ENCODE measurements at regions of chr6 and their contacts with region 1.

Region 1: GRCh38 chr6:159134701-159135364 is 34.4 kb upstream of the FNDC1 start:
- DNase-seq: peak; percentile 89
- H3K4me3 Mint-ChIP-seq: no peak overlapping the region
- H3K27ac Mint-ChIP-seq: no peak overlapping the region
- H3K4me1 Mint-ChIP-seq: no peaks in the 10 kb centered on the region
- H3K27me3 Mint-ChIP-seq: peaks cover 5% of the 10 kb centered on the region

Region 2: GRCh38 chr6:158704181-158704822 is 430.5 kb before region 1 on chr6:
- CTCF ChIA-PET with region 1: no interaction called
- intact Hi-C with region 1: loop called (anchors 2 kb)
- DNase-seq: peak; percentile 80
- H3K4me3 Mint-ChIP-seq: peak overlapping the region; percentile 58
- H3K27ac Mint-ChIP-seq: no peak overlapping the region
- H3K4me1 Mint-ChIP-seq: peaks cover 15% of the 10 kb centered on the region
- H3K27me3 Mint-ChIP-seq: no peaks in the 10 kb centered on the region

Region 3: GRCh38 chr6:158905277-158905676 is 229.6 kb before region 1 on chr6:
- CTCF ChIA-PET with region 1: no interaction called
- intact Hi-C with region 1: no loop called
- DNase-seq: no peak
- H3K4me3 Mint-ChIP-seq: no peak overlapping the region
- H3K27ac Mint-ChIP-seq: no peak overlapping the region
- H3K4me1 Mint-ChIP-seq: peaks cover 6% of the 10 kb centered on the region
- H3K27me3 Mint-ChIP-seq: no peaks in the 10 kb centered on the region

Region 4: DNA sequence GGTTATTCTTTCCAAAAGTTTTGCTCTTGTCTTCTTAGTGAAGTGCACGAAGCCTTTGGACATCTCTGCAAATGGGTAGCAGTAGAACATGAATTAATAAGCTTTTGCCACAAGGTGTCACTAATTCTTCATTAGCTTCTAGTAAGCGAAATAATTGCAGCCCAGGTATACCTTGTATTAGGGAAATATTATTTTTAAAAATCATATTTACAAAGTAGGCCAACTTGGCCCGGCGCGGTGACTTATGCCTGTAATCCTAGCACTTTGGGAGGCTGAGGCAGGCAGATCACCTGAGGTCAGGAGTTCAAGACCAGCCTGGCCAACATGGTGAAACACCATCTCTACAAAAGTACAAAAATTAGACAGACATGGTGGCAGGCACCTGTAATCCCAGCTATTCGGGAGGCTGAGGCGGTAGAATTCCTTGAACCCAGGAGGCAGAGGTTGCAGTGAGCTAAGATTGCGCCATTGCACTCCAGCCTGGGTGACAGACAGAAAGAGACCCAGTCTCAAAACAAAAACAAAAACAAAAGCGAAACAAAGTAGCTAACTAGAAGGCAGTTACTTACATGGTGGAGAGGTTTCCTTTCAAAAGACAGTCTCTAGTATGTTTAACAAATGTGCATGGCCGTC is 126.1 kb before region 1 on chr6:
- CTCF ChIA-PET with region 1: interaction called, 215 read pairs
- intact Hi-C with region 1: loop called (anchors 1 kb)
- DNase-seq: no peak
- H3K4me3 Mint-ChIP-seq: no peak overlapping the region
- H3K27ac Mint-ChIP-seq: no peak overlapping the region
- H3K4me1 Mint-ChIP-seq: peaks cover 29% of the 10 kb centered on the region
- H3K27me3 Mint-ChIP-seq: no peaks in the 10 kb centered on the region

Region 5: DNA sequence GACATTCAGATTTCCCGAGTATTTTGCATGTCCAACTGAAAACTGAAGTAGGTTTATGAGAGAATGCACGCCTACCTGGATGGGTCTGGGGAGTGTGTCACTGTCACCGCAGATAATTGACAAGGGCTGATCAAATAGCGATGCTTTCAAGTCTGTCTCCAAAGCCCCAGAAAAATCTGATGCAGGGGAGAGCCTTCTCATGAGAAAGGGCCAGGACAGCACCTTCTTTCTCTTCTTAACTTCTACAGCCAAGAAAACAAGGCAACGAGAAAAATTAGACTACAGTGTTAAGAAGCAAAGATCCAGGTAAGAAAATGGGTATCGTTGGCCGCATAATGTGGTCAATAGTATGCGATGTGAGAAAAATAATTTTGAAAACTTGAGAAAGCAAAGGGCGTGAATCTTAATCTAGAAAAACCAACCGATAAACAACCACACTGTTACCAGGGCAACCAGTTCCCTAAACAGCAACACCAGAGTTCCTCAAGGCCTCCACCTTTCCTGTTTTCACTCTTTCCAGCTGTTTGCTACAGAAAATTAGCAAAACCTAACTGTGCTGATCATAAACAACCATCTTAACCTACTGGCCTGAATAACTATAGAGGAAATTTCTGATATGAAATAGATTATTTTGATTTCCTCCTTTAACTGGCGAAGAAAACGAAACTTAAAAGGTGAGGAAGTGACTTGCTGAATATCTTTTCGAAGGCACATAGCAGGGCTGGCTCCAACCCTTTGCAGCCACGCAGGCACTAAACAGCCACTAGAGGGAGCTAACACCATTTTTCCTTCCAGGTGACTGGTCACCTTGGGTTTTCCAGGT is 92.6 kb before region 1 on chr6:
- CTCF ChIA-PET with region 1: interaction called, 12 read pairs
- intact Hi-C with region 1: loop called (anchors 1 kb)
- DNase-seq: peak; percentile 86
- H3K4me3 Mint-ChIP-seq: peak overlapping the region; percentile 96
- H3K27ac Mint-ChIP-seq: peak overlapping the region; percentile 98
- H3K4me1 Mint-ChIP-seq: peaks cover 69% of the 10 kb centered on the region
- H3K27me3 Mint-ChIP-seq: no peaks in the 10 kb centered on the region

Region 6: GRCh38 chr6:159090530-159091480 is 44.0 kb before region 1 on chr6:
- CTCF ChIA-PET with region 1: no interaction called
- intact Hi-C with region 1: no loop called
- DNase-seq: no peak
- H3K4me3 Mint-ChIP-seq: no peak overlapping the region
- H3K27ac Mint-ChIP-seq: no peak overlapping the region
- H3K4me1 Mint-ChIP-seq: peaks cover 62% of the 10 kb centered on the region
- H3K27me3 Mint-ChIP-seq: no peaks in the 10 kb centered on the region

Measured in activated naive CD4-positive, alpha-beta T cell treated with anti-CD3 and anti-CD28 coated beads for 36 hours (primary cell).